CD4-positive, alpha-beta T cell (primary cell): ENCODE measurements at regions of chr10 and their contacts with region 1.

Region 1: GRCh38 chr10:24897326-24897926 is 55.0 kb downstream of the PRTFDC1 start:
- DNase-seq: peak in 4 of 14 experiments; percentile 34 to 56 (median 41)
- ATAC-seq: peak; percentile 59
- H3K4me3 ChIP-seq: no peak overlapping the region
- H3K4me3 Mint-ChIP-seq: no peak overlapping the region
- H3K27ac ChIP-seq: peak overlapping the region in 1 of 2 donors; percentile 5
- H3K27ac Mint-ChIP-seq: peak overlapping the region; percentile 11
- H3K4me1 ChIP-seq: peaks cover 53% of the 10 kb centered on the region
- H3K4me1 Mint-ChIP-seq: peaks cover 42% of the 10 kb centered on the region
- H3K27me3 ChIP-seq: no peaks in the 10 kb centered on the region
- H3K27me3 Mint-ChIP-seq: no peaks in the 10 kb centered on the region
- CTCF ChIP-seq: no peak

Region 2: GRCh38 chr10:24685958-24686540 is 211.4 kb before region 1 on chr10:
- CTCF ChIA-PET with region 1: no interaction called
- POLR2A ChIA-PET with region 1: no interaction called
- intact Hi-C with region 1: no loop called
- DNase-seq: no peak
- ATAC-seq: no peak
- H3K4me3 ChIP-seq: no peak overlapping the region
- H3K4me3 Mint-ChIP-seq: no peak overlapping the region
- H3K27ac ChIP-seq: no peak overlapping the region
- H3K27ac Mint-ChIP-seq: no peak overlapping the region
- H3K4me1 ChIP-seq: no peaks in the 10 kb centered on the region
- H3K4me1 Mint-ChIP-seq: peaks cover 12% of the 10 kb centered on the region
- H3K27me3 ChIP-seq: no peaks in the 10 kb centered on the region
- H3K27me3 Mint-ChIP-seq: no peaks in the 10 kb centered on the region
- CTCF ChIP-seq: no peak

Region 3: GRCh38 chr10:24826019-24826418 is 71.4 kb before region 1 on chr10:
- CTCF ChIA-PET with region 1: no interaction called
- POLR2A ChIA-PET with region 1: no interaction called
- intact Hi-C with region 1: no loop called
- DNase-seq: peak in 4 of 14 experiments; percentile 15 to 36 (median 18)
- ATAC-seq: peak; percentile 52
- H3K4me3 ChIP-seq: no peak overlapping the region
- H3K4me3 Mint-ChIP-seq: peak overlapping the region; percentile 40
- H3K27ac ChIP-seq: no peak overlapping the region
- H3K27ac Mint-ChIP-seq: peak overlapping the region; percentile 1
- H3K4me1 ChIP-seq: peaks cover 4% of the 10 kb centered on the region
- H3K4me1 Mint-ChIP-seq: peaks cover 48% of the 10 kb centered on the region
- H3K27me3 ChIP-seq: no peaks in the 10 kb centered on the region
- H3K27me3 Mint-ChIP-seq: no peaks in the 10 kb centered on the region
- CTCF ChIP-seq: no peak

Region 4: DNA sequence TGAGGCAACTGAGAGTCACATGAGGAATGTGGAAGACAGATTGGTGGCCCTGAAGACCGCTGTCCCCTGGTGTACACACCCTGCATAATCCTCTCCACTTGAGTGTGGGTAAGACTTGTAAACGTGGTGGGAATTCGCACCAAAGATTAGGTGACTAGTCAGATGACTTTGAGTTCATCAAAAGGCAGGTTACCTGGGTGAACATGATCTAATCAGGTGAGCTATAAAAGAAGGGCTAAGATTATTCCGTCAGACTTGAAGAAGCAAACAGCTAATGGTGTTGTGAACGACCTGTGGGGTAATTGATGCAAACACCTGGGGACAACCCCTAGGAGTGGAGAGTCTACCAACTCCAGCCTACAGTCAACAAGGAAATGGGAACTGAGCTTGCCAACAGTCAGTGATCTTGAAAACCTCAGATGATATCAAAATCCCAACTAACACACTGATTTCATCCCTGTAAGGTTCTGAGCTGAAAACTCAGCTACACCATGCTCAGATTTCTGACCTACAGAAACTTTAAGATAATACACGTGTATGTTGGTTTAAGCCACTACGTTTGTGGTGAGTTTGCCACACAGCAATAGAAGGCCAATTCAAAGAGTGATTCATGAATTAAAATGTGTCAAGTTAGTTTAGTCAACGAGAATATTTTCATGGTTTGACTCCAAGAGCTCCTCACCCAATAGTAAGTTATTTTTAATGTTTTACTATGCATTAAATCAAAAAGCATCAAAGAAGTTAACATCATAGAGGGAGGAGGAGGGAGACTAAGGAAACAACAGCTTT is 38.3 kb after region 1 on chr10:
- CTCF ChIA-PET with region 1: no interaction called
- POLR2A ChIA-PET with region 1: no interaction called
- intact Hi-C with region 1: no loop called
- DNase-seq: no peak
- ATAC-seq: no peak
- H3K4me3 ChIP-seq: no peak overlapping the region
- H3K4me3 Mint-ChIP-seq: no peak overlapping the region
- H3K27ac ChIP-seq: no peak overlapping the region
- H3K27ac Mint-ChIP-seq: no peak overlapping the region
- H3K4me1 ChIP-seq: no peaks in the 10 kb centered on the region
- H3K4me1 Mint-ChIP-seq: no peaks in the 10 kb centered on the region
- H3K27me3 ChIP-seq: no peaks in the 10 kb centered on the region
- H3K27me3 Mint-ChIP-seq: no peaks in the 10 kb centered on the region
- CTCF ChIP-seq: no peak

Region 5: DNA sequence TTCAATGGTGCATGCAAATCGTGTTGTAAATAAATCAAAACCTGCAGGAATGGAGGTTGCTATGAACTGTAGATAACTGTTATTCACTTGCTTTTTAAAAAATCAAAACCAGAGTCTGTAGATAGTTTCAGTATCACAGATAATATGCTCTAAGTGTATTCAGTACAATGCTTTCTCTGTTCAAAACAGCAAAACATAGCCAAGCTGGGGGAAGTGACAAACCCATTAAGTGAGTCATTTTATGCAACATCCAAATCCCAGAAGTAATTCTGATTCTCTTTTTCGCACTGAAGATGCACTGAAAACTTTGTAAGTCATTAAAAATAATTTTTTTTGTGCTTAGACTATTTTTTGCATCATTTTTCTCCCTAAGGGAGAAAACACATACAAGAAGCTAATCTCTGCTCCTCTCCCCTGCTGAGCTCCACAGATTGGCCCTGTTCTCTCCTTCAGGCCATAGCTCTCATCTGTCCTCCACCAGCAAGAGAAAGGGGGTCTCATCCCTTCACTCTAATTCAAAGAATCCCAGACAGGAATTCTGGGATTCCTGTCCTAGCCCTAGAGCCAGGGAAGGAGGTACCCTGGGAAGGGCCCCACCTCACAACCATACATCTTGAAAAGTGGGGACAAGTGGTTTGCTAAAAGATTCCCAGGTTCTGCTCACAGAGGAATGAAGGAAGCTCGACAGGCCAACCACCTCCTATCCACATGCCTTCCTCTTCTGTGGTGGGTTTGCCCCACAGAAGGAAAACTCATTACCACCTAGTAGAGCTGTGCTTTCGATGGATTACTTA is 50.1 kb after region 1 on chr10:
- CTCF ChIA-PET with region 1: no interaction called
- POLR2A ChIA-PET with region 1: no interaction called
- intact Hi-C with region 1: loop called in 1 of 2 experiments (anchors 5 kb)
- DNase-seq: no peak
- ATAC-seq: no peak
- H3K4me3 ChIP-seq: no peak overlapping the region
- H3K4me3 Mint-ChIP-seq: no peak overlapping the region
- H3K27ac ChIP-seq: no peak overlapping the region
- H3K27ac Mint-ChIP-seq: no peak overlapping the region
- H3K4me1 ChIP-seq: peaks cover 10% of the 10 kb centered on the region
- H3K4me1 Mint-ChIP-seq: peaks cover 7% of the 10 kb centered on the region
- H3K27me3 ChIP-seq: no peaks in the 10 kb centered on the region
- H3K27me3 Mint-ChIP-seq: no peaks in the 10 kb centered on the region
- CTCF ChIP-seq: no peak